Transverse colon (tissue), 4 donors: ENCODE measurements at regions of chr13 and their contacts with region 1.

Region 1: DNA sequence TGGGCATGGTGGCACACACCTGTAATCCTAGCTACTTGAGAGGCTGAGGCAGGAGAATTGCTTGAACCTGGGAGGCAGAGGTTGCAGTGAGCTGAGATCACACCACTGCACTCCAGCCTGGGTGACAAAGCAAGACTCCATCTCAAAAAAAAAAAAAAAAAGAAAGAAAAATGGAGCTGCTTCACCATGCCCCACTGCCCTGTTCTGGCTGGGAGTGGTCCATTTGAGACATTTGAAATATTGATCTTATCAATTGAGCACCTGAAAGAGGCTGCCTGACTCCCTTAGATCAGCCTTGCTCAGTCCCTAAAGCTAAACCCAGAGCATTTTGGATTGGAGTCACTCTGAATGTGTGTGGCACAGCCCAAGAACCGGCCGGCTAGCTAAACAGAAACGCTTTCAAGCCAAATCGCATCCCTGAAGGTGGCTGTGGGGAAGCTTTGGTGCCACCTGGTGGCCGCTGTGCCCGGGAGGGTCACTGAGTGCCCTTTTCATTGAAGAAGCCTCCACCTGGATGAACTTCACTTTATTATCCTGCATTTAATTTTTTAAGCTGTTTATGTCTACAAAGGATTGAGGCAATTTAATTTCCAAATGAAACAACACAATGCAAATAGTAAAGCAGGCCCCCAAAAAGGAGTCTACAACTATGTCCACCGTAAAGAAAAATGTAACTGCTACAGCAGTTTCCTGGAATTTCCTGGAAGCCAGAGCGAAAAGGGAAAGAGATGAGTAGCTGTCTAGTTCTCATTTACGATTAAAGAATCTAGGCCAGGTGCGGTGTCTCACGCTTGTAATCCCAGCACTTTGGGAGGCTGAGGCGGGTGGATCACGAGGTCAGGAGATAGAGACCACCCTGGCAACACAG is 53.1 kb upstream of the SERPINE3 start:
- DNase-seq: peak; percentile 80
- H3K4me3 ChIP-seq: no peak overlapping the region
- H3K27ac ChIP-seq: no peak overlapping the region
- H3K4me1 ChIP-seq: no peaks in the 10 kb centered on the region
- H3K27me3 ChIP-seq: no peaks in the 10 kb centered on the region
- CTCF ChIP-seq: peak; percentile 81 to 94 (median 88)
- EP300 ChIP-seq: no peak
- POLR2A ChIP-seq: no peak

Region 2: GRCh38 chr13:50467156-50468110 is 818.9 kb before region 1 on chr13:
- in situ Hi-C with region 1: no loop called
- intact Hi-C with region 1: no loop called
- DNase-seq: no peak
- H3K4me3 ChIP-seq: no peak overlapping the region
- H3K27ac ChIP-seq: no peak overlapping the region
- H3K4me1 ChIP-seq: no peaks in the 10 kb centered on the region
- H3K27me3 ChIP-seq: no peaks in the 10 kb centered on the region
- CTCF ChIP-seq: no peak
- EP300 ChIP-seq: no peak
- POLR2A ChIP-seq: no peak

Region 3: GRCh38 chr13:51125498-51126226 is 160.7 kb before region 1 on chr13:
- in situ Hi-C with region 1: loop called in 3 of 4 experiments (anchors 10 kb)
- intact Hi-C with region 1: loop called (anchors 5 kb)
- DNase-seq: peak; percentile 49
- H3K4me3 ChIP-seq: no peak overlapping the region
- H3K27ac ChIP-seq: no peak overlapping the region
- H3K4me1 ChIP-seq: no peaks in the 10 kb centered on the region
- H3K27me3 ChIP-seq: no peaks in the 10 kb centered on the region
- CTCF ChIP-seq: peak; percentile 62 to 77 (median 71)
- EP300 ChIP-seq: no peak
- POLR2A ChIP-seq: no peak

Region 4: GRCh38 chr13:51148952-51149573 is 137.3 kb before region 1 on chr13:
- in situ Hi-C with region 1: loop called in 1 of 4 experiments (anchors 10 kb)
- intact Hi-C with region 1: loop called (anchors 5 kb)
- DNase-seq: peak; percentile 11
- H3K4me3 ChIP-seq: no peak overlapping the region
- H3K27ac ChIP-seq: no peak overlapping the region
- H3K4me1 ChIP-seq: peaks cover 0 to 2% (median 0%) of the 10 kb centered on the region in 4 donors
- H3K27me3 ChIP-seq: peaks cover 8% of the 10 kb centered on the region
- CTCF ChIP-seq: peak; percentile 22 to 47 (median 42)
- EP300 ChIP-seq: no peak
- POLR2A ChIP-seq: no peak

Region 5: DNA sequence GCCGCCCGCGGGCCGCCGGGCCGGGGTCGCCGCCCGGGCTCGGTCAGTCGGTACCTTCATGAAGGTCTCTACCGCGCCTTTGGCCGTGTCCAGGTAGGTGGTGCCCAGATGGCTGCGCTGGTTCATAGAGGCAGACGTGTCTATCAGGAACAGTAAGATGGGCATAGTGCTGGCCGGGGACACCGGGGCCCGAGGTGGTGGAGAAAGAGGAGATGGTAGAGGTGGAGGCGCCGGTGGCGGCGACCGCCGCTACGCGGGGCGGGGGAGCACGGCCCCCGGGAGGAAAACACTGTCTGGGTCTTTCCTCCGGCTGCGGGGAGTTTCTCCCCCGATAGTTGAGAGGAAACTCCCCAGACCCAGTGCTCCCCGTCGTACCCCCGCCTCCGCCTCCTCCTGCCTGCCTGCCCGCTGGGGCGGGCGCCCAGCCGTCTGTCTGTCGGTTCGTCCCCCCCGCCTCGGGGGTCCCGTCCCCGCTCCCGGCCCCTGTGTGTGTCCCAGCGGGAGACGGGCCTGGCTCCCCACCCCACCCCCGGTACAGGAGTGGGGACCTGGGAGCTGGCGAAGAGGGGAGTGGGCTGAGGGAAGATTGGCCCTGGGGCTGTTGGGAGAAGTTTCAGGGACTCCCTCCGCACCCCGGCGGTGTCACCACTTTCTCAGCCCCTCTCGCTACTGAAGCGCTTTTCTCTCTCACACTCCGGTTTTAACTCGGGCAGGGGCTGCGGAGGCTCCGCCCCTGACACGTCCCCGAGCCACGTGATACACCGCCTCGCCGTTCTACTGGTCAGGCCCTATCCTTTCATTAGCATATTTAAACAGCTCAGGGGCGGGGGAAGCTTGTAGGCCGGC is 166.2 kb after region 1 on chr13 and contains the start of gene INTS6:
- in situ Hi-C with region 1: no loop called
- intact Hi-C with region 1: loop called (anchors 10 kb)
- DNase-seq: peak; percentile 37
- H3K4me3 ChIP-seq: peak within 1 kb of the TSS; percentile 74 to 99 (median 90)
- H3K27ac ChIP-seq: peak within 1 kb of the TSS; percentile 99 to 100 (median 100)
- H3K4me1 ChIP-seq: peaks cover 14 to 28% (median 22%) of the 10 kb centered on the region in 4 donors
- H3K27me3 ChIP-seq: no peaks in the 10 kb centered on the region
- CTCF ChIP-seq: no peak
- EP300 ChIP-seq: no peak
- POLR2A ChIP-seq: peak; percentile 100
- total RNA-seq, gene INTS6: 15.3 to 37.0 (median 25.2) TPM